ENCODE measurements at regions of chr12 and their contacts with region 1.

Region 1: DNA sequence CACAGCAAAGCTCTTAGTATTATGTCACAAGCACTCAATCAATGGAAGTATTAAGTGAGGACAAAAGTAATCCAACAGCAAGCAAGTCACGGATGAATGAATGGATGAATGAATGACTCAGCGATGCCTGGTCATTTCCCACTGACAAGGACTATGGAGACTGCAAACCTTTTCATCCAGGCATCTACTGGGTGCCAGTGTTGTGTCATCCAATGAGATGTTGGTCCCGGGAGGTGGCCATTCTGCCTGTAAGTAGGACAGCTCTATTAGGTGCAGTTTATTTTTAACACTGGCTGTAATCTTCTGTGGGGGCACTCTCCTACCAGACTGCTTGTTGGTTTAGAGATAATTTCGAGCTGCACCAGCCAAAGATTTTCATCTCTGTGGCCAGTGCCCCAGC is 39.4 kb downstream of the STAB2 start:
- DNase-seq: peak; percentile 48
- ATAC-seq: peak; percentile 66 to 93

Region 2: GRCh38 chr12:103495479-103496456 is 130.7 kb before region 1 on chr12 and contains the start of gene C12orf42:
- intact Hi-C with region 1: no loop called
- DNase-seq: peak; percentile 24
- ATAC-seq: peak; percentile 70 to 73
- total RNA-seq, gene C12orf42: not detected

Region 3: GRCh38 chr12:103680591-103681141 is 54.2 kb after region 1 on chr12:
- intact Hi-C with region 1: loop called in 1 of 2 experiments (anchors 2 kb)
- DNase-seq: peak; percentile 74
- ATAC-seq: peak; percentile 90 to 95

Region 4: GRCh38 chr12:103868215-103868614 is 241.7 kb after region 1 on chr12:
- intact Hi-C with region 1: loop called in 1 of 2 experiments (anchors 2 kb)
- DNase-seq: no peak
- ATAC-seq: no peak

Measured in left cardiac atrium (tissue), 4 donors.